ENCODE measurements at regions of chr14 and their contacts with region 1.

Region 1: DNA sequence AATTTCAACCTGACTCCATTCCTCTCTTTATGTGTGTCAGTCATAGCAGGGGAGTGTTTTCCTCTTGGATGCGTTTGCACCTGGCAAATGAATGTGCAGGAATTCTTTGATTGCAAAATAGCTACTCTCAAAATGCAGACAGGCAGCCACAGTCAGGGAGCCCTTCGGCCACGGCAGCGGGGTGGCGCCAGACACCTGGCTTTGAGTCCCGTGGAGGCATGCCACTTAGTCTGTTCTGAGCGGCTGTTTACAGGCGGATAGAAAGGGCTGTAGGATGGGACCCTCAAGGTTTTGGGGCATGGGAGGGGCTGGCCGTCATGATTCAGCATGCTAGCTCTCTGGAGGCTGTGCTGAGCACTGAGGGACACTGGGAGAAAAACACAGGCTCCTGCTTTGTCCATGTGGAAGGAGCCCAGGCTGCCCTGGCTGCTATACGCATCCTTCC is 117.1 kb downstream of the SLC25A47 start:
- DNase-seq: peak; percentile 64 to 92 (median 84)
- H3K4me3 ChIP-seq: peak overlapping the region in 7 of 59 donors; percentile 6 to 27 (median 17)
- H3K27ac ChIP-seq: peak overlapping the region in 55 of 59 donors; percentile 10 to 87 (median 67)
- H3K27me3 ChIP-seq: no peaks in the 10 kb centered on the region
- CTCF ChIP-seq: peak; percentile 55 to 86 (median 76)

Region 2: DNA sequence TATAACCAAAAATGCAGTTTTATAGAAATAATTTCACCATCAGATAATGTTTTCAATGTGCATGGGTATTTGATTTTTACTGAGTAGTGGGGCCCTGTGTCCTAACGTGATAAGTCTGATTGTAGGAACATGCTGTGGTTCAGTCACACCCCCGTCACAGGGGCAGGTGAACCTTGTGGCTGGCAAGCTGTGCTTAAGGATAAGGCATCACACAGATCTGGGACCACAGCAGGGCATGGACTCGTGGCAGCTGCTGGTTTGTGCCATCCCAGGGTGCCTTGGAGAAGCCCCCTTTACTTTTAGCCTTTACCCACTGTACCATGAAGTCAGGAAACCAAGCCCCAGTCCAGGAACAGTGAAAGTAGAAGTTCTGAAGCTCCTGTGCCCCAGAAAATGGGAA is 942.3 kb before region 1 on chr14:
- intact Hi-C with region 1: no loop called
- DNase-seq: no peak
- H3K4me3 ChIP-seq: no peak overlapping the region
- H3K27ac ChIP-seq: peak overlapping the region in 15 of 59 donors; percentile 4 to 70 (median 32)
- H3K27me3 ChIP-seq: no peaks in the 10 kb centered on the region
- CTCF ChIP-seq: no peak

Region 3: DNA sequence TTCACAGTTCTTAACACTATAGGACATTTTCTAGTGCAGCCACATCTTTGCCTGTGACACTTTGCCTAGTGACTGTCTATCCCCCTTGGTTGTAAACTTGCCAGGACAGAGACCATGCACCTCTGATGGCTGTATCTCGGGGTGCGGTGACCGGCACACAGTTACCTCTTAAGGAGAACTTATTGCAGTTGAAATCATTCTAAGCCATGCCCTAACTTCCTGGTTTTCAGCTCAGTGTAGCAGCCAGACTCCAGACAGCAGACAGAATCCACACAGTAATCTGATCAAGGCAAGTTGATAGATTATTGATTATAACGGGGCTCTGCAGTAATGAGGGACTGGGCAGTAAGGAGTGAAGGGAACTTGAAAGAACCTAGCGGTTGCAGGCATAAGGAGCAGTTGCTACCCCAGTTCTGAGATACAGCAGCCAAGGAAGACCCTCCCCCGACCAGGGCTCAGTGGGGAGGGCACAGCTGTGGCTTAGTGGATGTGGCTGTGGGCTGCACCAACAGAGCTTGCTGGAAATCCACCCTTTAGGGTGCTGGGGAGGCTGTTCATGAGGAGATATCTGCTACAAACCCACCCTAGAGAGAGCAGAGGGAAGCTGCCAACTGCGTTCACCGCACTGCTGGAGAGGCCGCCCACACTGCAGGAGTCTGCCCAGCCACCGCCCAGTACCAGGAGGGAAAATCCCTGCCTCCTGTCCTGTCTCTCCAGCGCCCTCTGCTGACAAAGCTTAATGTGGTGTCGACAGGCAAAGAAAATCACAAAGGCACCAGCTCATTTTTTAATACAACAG is 205.2 kb after region 1 on chr14:
- intact Hi-C with region 1: loop called (anchors 5 to 10 kb)
- DNase-seq: peak; percentile 53 to 83 (median 82)
- H3K4me3 ChIP-seq: peak overlapping the region in 1 of 59 donors; percentile 25
- H3K27ac ChIP-seq: no peak overlapping the region
- H3K27me3 ChIP-seq: no peaks in the 10 kb centered on the region
- CTCF ChIP-seq: peak; percentile 63 to 90 (median 79)

Region 4: DNA sequence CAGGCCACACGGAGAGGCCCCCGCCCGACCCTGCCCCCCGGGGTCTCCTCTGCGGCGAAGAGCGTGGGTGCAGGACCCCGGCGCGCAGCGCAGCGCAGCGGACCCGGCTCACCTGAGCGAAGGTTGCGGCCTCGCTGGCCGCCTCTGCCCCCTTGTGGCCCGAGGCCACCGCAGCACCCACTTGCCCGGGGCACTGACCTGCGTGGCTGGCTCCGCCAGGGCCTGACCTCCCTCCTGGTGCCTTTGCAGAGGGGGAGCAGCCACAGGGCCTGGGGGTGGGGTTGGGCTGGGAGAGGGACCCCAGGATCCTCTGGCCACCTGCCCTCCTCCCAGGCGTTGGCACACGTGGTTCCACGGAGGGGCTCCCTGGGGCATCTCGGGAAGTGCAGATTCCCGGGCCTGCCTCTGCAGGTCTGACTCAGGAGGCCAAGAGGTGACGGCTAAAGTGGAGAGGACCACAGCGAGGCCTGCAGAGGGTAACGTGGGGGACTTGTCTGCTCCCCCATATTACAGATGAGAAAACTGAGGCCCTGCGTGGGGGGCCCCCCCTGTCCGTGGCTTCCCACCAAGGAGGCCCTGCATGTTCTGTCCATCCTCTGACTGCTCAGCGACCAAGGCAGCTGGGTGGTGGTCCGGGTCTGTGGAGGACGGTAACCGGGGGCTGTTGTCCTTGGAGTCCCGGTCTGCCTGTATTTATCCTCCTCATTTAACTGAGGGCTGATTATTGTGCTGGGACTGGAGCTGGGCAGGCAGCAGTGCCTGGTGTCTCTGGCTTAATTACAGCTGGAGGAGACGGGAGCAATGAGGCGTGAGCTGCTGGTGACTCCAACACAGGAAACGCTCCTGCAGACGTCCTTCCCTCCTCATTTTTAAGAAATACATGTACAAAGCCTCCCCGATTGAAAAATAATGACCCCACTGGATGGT is 214.9 kb after region 1 on chr14:
- intact Hi-C with region 1: loop called in 1 of 2 experiments (anchors 10 kb)
- DNase-seq: peak in 1 of 10 donors; percentile 56
- H3K4me3 ChIP-seq: peak overlapping the region in 7 of 59 donors; percentile 3 to 37 (median 20)
- H3K27ac ChIP-seq: no peak overlapping the region
- H3K27me3 ChIP-seq: peaks cover 0 to 25% (median 7%) of the 10 kb centered on the region in 45 donors
- CTCF ChIP-seq: peak in 53 of 56 donors; percentile 19 to 67 (median 50)

Region 5: GRCh38 chr14:100828031-100828769 is 388.0 kb after region 1 on chr14:
- intact Hi-C with region 1: loop called in 1 of 2 experiments (anchors 2 kb)
- DNase-seq: peak in 2 of 10 donors; percentile 54 to 57
- H3K4me3 ChIP-seq: peak overlapping the region in 58 of 59 donors; percentile 21 to 74 (median 53)
- H3K27ac ChIP-seq: no peak overlapping the region
- H3K27me3 ChIP-seq: peaks cover 0 to 39% (median 0%) of the 10 kb centered on the region in 45 donors
- CTCF ChIP-seq: peak; percentile 15 to 70 (median 50)

Region 6: DNA sequence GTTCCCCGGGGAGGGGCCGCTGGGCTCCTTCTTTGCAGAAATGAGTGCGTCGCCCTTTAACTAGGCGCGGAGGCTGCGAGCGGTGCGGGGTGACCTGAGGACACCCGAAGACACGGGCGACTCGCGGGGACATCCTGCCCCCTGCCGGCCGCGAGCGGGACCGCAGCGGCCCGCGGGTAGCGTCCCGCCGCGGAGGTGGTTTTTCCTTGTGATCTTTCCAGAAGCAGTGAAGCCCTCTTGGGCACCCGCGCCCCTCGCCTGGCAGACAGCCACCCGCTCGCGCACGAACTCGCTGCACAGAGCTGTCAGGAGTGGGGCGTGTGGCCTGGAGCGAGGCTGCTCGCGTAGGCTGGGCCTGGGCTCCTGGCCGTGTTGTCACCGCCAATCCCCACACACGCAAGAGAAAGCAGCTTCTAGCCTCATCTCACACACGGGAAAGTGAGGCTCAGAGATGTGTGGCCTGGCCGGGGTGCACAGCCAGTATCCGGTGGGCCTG is 1188.3 kb after region 1 on chr14:
- intact Hi-C with region 1: loop called in 1 of 2 experiments (anchors 5 kb)
- DNase-seq: peak; percentile 64 to 86 (median 76)
- H3K4me3 ChIP-seq: peak overlapping the region in 57 of 59 donors; percentile 6 to 61 (median 40)
- H3K27ac ChIP-seq: peak overlapping the region in 21 of 59 donors; percentile 4 to 78 (median 41)
- H3K27me3 ChIP-seq: no peaks in the 10 kb centered on the region
- CTCF ChIP-seq: peak; percentile 97 to 100 (median 99)

Measured in dorsolateral prefrontal cortex (tissue), 120 donors.